Ovary (tissue), 10 donors: ENCODE measurements at regions of chr15 and their contacts with region 1.

Region 1: DNA sequence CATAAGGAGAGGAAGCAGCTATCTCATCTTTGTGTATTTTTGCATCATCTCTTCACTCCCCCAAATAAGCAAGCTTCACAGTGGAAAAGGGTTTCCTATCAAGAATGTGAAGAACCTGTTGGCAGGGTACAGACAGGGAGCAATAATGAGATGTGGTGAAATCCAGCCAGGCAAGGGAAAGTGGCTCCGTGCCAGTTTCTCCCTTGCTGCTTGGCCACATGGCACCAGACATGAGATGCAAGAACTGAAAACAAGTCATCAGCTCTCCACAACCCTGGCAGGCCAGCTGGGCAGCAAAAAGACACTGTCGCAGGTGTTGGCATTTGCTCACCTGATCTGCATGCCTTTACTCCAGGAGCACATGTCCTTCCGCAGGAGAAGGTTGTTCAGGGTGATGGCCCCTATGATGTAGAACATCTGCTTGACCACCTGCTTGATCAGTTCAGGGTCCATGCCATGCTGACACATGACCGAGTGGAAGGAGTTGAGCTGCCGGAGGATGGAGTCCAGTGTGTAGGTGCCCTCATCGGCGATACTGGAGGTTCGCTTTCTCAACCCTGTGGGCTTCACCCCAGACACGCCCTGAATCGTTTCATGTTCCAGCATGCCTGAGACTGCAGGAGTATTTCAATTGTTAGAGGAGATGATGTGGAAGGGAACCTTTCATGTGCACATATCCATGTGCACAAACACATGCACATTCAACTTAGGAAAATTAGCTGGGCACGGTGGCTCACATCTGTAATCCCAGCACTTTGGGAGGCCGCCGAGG is 23.3 kb upstream of the MYO5C start:
- DNase-seq: no peak
- H3K4me3 ChIP-seq: no peak overlapping the region
- H3K27ac ChIP-seq: no peak overlapping the region
- H3K4me1 ChIP-seq: no peaks in the 10 kb centered on the region
- H3K27me3 ChIP-seq: no peaks in the 10 kb centered on the region
- CTCF ChIP-seq: no peak
- EP300 ChIP-seq: no peak
- POLR2A ChIP-seq: no peak

Region 2: DNA sequence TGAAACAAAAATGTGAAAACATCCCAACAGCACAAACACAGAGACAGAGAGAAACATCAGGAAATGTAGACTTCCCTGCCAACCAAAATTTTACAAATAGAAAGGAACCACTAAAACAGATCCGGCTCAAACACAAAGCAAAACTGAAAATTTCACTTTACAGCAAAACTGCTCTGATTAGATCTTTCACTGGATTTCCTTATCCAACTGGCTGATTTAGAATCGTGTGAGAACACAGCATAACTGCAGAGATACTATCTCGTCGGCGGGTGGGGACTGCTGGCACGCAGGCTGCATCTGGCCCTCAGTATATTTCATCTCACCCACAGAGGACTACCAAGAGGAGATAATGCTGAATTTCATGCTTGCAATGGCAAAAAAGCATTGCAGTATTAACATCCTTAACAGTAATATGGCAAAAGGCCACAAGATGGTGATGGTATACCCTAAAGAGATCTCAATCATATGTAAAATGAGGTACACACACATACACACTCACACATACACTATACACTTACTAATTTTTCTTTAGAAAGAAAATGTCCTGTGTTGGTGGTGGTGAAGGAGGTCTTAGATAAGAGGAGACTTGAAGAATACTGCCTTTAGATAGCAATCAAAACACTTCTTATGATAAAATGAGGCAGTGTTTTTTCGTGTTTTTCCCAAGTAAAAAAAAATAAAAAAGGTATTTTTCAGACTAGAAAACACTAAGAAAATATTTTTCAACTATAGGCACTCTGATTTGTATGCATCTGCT is 336.7 kb before region 1 on chr15:
- intact Hi-C with region 1: loop called in 1 of 4 experiments (anchors 10 kb)
- DNase-seq: no peak
- H3K4me3 ChIP-seq: no peak overlapping the region
- H3K27ac ChIP-seq: no peak overlapping the region
- H3K4me1 ChIP-seq: no peaks in the 10 kb centered on the region
- H3K27me3 ChIP-seq: no peaks in the 10 kb centered on the region
- CTCF ChIP-seq: no peak
- EP300 ChIP-seq: no peak
- POLR2A ChIP-seq: no peak

Region 3: GRCh38 chr15:52379395-52380106 is 60.6 kb after region 1 on chr15:
- intact Hi-C with region 1: loop called in 1 of 4 experiments (anchors 10 kb)
- DNase-seq: peak in 2 of 5 donors; percentile 11 to 15
- H3K4me3 ChIP-seq: no peak overlapping the region
- H3K27ac ChIP-seq: no peak overlapping the region
- H3K4me1 ChIP-seq: no peaks in the 10 kb centered on the region
- H3K27me3 ChIP-seq: no peaks in the 10 kb centered on the region
- CTCF ChIP-seq: no peak
- EP300 ChIP-seq: no peak
- POLR2A ChIP-seq: no peak

Region 4: DNA sequence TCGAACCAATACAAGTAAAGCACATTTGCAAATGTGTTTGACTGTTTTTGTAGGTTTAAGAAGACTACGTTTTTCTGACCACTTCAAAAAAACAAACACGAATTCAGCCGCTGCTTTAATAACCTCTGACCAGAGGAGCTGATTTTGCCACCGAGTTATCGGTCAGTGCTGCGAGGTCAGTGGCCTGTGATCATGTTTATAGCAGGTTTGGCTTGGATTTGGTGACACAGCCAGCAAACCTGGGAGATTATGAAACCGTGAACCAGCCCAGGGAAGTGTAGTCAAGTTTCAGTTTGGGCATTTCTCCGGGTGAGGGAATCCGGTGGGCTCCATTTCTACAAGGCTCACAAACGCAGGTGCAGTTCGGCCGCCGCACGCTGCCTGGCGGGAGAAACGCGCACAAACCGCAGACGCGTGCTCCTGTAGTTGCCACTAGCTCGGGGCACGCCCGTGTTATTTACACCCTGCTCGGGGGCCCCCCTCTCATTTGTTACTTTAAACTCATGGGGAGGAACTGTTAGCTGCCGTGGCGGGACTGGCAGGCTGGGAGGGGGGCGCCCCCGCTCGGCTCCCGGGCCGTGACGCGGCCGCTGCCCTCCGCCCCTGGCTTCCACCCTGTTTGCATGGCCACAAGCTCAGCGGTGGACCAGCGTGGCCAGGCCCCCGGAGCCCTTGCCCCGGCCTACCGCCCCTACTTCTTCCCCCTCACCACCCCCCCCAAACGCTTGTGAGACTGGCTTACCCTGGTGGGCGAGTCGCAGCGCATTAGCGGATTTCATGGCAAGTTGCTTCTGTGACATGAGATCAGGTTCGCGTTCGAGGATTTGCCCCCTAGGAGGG is 484.8 kb after region 1 on chr15:
- intact Hi-C with region 1: no loop called
- DNase-seq: no peak
- H3K4me3 ChIP-seq: no peak overlapping the region
- H3K27ac ChIP-seq: no peak overlapping the region
- H3K4me1 ChIP-seq: peaks cover 7% of the 10 kb centered on the region
- H3K27me3 ChIP-seq: no peaks in the 10 kb centered on the region
- CTCF ChIP-seq: no peak
- EP300 ChIP-seq: no peak
- POLR2A ChIP-seq: no peak